Natural killer cell (primary cell): ENCODE measurements at regions of chr3 and their contacts with region 1.

Region 1: DNA sequence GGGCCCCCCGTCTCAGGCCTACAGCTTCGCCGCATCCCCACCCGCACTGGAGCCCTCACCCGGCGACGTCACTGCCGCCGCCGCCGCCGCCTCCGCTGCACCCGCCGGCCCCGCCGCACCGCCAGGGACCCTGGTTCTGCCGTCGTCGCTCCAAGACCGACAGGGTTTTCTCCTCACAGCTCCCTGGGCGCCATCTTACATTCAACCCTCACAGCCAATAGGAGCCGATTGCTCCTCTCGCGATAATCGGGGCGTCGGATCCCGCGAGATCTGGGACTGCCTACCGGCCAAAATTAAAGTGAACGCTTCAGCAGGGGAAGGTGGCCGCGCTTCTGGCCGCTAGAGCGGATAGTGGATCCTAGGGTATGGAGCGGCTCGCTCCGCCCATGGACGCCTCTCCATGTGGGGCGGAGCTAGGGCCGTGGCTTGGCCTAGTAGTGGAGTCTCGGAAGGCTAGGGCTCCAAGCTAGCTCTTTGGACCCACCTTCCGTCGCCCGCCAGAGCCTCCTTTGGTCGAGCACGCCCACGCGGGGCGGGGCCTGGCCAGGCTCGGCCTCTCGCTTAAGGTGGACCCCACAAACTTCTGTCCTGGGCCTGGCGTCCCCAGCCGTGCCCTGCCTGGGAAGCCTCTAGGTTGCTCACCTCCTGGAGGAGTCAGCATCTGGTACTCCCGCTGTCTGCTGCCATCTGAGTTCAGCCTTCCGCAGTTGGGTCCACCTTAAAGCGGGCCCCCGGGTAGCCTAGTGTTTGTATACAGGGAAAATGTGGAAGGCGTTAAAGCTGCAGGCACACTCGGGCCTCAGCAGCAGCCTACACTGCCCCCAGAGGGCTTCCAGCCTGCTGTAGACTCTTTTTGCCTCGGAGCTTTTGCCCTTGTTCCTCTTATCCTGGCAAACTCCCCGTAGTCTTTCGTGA is at the start of gene QRICH1:
- DNase-seq: peak; percentile 95 to 97
- ATAC-seq: peak; percentile 79 to 89 (median 81)
- H3K4me3 ChIP-seq: peak within 1 kb of the TSS; percentile 84
- H3K4me3 Mint-ChIP-seq: peak within 1 kb of the TSS; percentile 92
- H3K27ac ChIP-seq: peak within 1 kb of the TSS; percentile 79
- H3K27ac Mint-ChIP-seq: peak within 1 kb of the TSS; percentile 95 to 96
- H3K4me1 ChIP-seq: peaks cover 30% of the 10 kb centered on the region
- H3K4me1 Mint-ChIP-seq: peaks cover 31 to 44% of the 10 kb centered on the region in 2 donors
- H3K27me3 ChIP-seq: no peaks in the 10 kb centered on the region
- H3K27me3 Mint-ChIP-seq: no peaks in the 10 kb centered on the region
- CTCF ChIP-seq: peak; percentile 57
- total RNA-seq, gene QRICH1: 220 to 230 (median 227) TPM

Region 2: DNA sequence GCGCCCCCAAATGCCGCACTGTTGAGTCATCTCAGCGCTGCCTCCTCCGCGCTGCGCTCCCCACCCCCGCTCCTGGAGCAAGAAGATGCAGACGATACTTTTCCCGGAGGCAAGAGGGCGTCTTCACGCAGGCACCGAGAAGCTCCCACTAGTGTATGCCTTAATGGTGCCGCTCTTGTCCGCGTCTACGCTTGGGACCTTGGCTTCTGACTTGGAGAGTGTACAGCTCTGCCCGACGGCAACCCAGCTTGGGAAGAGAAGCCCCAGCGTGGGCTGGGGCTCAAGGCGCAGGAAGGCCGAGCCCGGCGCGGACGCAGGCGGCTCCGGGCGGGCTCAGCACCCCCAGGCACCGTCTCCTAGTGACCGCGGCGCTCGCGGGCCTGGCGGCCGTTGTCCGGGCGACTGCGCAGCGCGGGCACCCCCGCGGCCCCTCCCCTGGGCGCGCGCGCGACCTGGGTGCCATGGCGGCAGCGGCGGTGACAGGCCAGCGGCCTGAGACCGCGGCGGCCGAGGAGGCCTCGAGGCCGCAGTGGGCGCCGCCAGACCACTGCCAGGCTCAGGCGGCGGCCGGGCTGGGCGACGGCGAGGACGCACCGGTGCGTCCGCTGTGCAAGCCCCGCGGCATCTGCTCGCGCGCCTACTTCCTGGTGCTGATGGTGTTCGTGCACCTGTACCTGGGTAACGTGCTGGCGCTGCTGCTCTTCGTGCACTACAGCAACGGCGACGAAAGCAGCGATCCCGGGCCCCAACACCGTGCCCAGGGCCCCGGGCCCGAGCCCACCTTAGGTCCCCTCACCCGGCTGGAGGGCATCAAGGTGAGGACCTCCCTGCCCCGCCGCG is 104.1 kb before region 1 on chr3 and contains the start of gene P4HTM:
- intact Hi-C with region 1: loop called (anchors 1 kb)
- DNase-seq: peak; percentile 64 to 85
- ATAC-seq: peak; percentile 65 to 77 (median 73)
- H3K4me3 ChIP-seq: peak within 1 kb of the TSS; percentile 75
- H3K4me3 Mint-ChIP-seq: peak within 1 kb of the TSS; percentile 90
- H3K27ac ChIP-seq: peak within 1 kb of the TSS; percentile 62
- H3K27ac Mint-ChIP-seq: peak within 1 kb of the TSS; percentile 73 to 89
- H3K4me1 ChIP-seq: peaks cover 26% of the 10 kb centered on the region
- H3K4me1 Mint-ChIP-seq: peaks cover 28 to 49% of the 10 kb centered on the region in 2 donors
- H3K27me3 ChIP-seq: no peaks in the 10 kb centered on the region
- H3K27me3 Mint-ChIP-seq: no peaks in the 10 kb centered on the region
- CTCF ChIP-seq: no peak
- total RNA-seq, gene P4HTM: 28.8 to 31.3 (median 30.6) TPM

Region 3: GRCh38 chr3:49021813-49022687 is 72.1 kb before region 1 on chr3 and contains the start of gene NDUFAF3:
- intact Hi-C with region 1: loop called (anchors 1 kb)
- DNase-seq: peak; percentile 95
- ATAC-seq: peak; percentile 74 to 92 (median 79)
- H3K4me3 ChIP-seq: peak within 1 kb of the TSS; percentile 82
- H3K4me3 Mint-ChIP-seq: peak within 1 kb of the TSS; percentile 98
- H3K27ac ChIP-seq: peak within 1 kb of the TSS; percentile 94
- H3K27ac Mint-ChIP-seq: peak within 1 kb of the TSS; percentile 95 to 99
- H3K4me1 ChIP-seq: peaks cover 43% of the 10 kb centered on the region
- H3K4me1 Mint-ChIP-seq: peaks cover 16 to 35% of the 10 kb centered on the region in 2 donors
- H3K27me3 ChIP-seq: no peaks in the 10 kb centered on the region
- H3K27me3 Mint-ChIP-seq: no peaks in the 10 kb centered on the region
- CTCF ChIP-seq: peak; percentile 99
- total RNA-seq, gene NDUFAF3: 51.0 to 72.9 (median 66.1) TPM

Region 4: DNA sequence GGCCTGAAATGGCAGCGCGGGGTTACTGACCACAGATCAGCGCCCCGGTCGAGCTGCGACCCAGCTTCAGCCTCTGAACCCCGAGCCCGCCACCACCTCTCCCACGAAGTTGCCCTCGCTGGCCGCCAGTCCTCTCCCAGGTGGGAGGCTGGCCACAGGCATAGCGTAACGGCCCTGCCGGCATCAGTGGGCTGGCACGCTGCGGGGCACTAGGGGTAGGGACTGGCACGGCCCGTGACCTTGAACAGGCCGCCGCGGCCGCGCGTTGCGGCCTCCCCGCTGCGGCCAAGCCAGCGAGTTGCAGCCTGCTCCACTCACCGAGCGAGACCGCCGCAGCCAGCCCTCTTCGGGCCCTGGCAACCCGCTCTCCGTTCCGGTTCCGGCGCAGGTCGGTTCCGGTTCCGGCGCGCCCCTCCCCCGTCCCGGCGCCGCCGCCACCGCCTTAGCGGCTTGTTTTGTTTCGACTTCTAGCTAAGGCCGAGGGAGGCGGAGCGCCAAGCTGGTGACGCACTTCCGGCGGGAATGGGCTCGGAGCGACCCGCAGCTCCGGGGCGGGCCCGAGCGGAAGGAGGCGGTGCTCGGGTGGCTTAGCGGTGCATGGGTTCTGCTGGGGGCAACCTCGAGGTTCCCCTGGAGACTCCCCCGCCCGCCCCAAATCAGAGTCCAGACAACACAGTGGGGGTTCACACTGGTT is 26.5 kb after region 1 on chr3 and contains the start of gene USP19:
- intact Hi-C with region 1: loop called (anchors 1 kb)
- DNase-seq: peak; percentile 91 to 98
- ATAC-seq: peak; percentile 93 to 94 (median 93)
- H3K4me3 ChIP-seq: peak within 1 kb of the TSS; percentile 85
- H3K4me3 Mint-ChIP-seq: peak within 1 kb of the TSS; percentile 77
- H3K27ac ChIP-seq: peak within 1 kb of the TSS; percentile 95
- H3K27ac Mint-ChIP-seq: peak within 1 kb of the TSS; percentile 81 to 87
- H3K4me1 ChIP-seq: peaks cover 24% of the 10 kb centered on the region
- H3K4me1 Mint-ChIP-seq: peaks cover 5 to 12% of the 10 kb centered on the region in 2 donors
- H3K27me3 ChIP-seq: no peaks in the 10 kb centered on the region
- H3K27me3 Mint-ChIP-seq: no peaks in the 10 kb centered on the region
- CTCF ChIP-seq: no peak
- total RNA-seq, gene USP19: 68.6 to 71.5 (median 68.6) TPM

Region 5: GRCh38 chr3:49411968-49412631 is 318.0 kb after region 1 on chr3 and contains the starts of genes RHOA and TCTA:
- intact Hi-C with region 1: loop called (anchors 2 kb)
- DNase-seq: peak; percentile 98 to 100
- ATAC-seq: peak; percentile 79 to 91 (median 84)
- H3K4me3 ChIP-seq: peak within 1 kb of the TSS; percentile 77
- H3K4me3 Mint-ChIP-seq: peak within 1 kb of the TSS; percentile 91
- H3K27ac ChIP-seq: peak within 1 kb of the TSS; percentile 90
- H3K27ac Mint-ChIP-seq: peak within 1 kb of the TSS; percentile 97 to 99
- H3K4me1 ChIP-seq: peaks cover 68% of the 10 kb centered on the region
- H3K4me1 Mint-ChIP-seq: peaks cover 66 to 70% of the 10 kb centered on the region in 2 donors
- H3K27me3 ChIP-seq: no peaks in the 10 kb centered on the region
- H3K27me3 Mint-ChIP-seq: no peaks in the 10 kb centered on the region
- CTCF ChIP-seq: no peak
- total RNA-seq, gene RHOA: 342 to 372 (median 370) TPM
- total RNA-seq, gene TCTA: 35.4 to 40.7 (median 36.7) TPM